H1 (cell line): ENCODE measurements at regions of chrX and their contacts with region 1.

Region 1: DNA sequence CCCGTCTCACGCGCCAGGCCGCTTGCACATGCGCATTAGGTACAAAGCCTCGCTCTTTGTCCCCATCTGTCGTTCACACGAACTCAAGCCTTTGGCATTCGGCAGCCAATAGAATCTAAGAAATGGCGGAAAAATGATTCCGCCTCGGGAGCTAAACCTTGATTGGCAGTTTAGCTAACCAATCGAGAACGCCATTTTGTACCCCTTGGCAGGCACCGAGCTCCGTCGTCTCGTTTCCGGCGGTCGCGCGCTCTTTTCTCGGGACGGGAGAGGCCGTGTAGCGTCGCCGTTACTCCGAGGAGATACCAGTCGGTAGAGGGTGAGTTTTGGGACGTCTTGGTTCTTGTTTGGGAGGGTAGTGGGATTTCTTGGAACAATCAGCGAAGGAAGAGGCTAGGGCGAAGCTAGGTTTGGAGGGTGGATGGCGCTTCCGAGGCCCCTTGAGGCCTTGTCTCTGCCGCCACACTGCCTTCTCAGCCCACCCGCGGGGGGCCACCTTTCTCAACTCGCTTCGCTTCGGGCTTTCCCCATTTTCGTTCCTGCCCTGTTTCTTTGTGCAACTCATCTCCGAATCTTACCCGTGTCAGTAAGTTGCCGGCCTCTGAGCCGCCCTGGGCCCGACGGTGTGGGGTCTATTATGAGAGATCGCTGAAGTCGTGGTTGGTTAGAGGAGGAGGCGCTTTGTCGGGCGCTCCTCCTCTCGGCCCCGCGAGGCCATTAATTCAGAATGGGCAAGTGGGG is at the start of gene NONO:
- DNase-seq: peak; percentile 70 to 88
- H3K4me3 ChIP-seq: peak within 1 kb of the TSS; percentile 86 to 99 (median 88)
- H3K27ac ChIP-seq: peak within 1 kb of the TSS; percentile 95
- H3K4me1 ChIP-seq: peaks cover 0 to 5% (median 3%) of the 10 kb centered on the region in 4 experiments; a peak in 3 of 7 replicates
- H3K27me3 ChIP-seq: no peaks in the 10 kb centered on the region
- CTCF ChIP-seq: peak in 1 of 3 experiments; percentile 3; a peak in 1 of 4 replicates
- EP300 ChIP-seq: no peak
- POLR2A ChIP-seq: peak; percentile 75 to 96
- RAD21 ChIP-seq: no peak
- total RNA-seq, gene NONO: 728 and 778 TPM in 2 replicates

Region 2: GRCh38 chrX:71216485-71216884 is 67.1 kb before region 1 on chrX:
- CTCF ChIA-PET with region 1: no interaction called
- POLR2A ChIA-PET with region 1: no interaction called
- DNase-seq: no peak
- H3K4me3 ChIP-seq: no peak overlapping the region
- H3K27ac ChIP-seq: no peak overlapping the region
- H3K4me1 ChIP-seq: peaks cover 0 to 3% (median 0%) of the 10 kb centered on the region in 4 experiments; a peak in 3 of 7 replicates
- H3K27me3 ChIP-seq: no peaks in the 10 kb centered on the region
- CTCF ChIP-seq: no peak
- EP300 ChIP-seq: no peak
- POLR2A ChIP-seq: no peak
- RAD21 ChIP-seq: no peak

Region 3: DNA sequence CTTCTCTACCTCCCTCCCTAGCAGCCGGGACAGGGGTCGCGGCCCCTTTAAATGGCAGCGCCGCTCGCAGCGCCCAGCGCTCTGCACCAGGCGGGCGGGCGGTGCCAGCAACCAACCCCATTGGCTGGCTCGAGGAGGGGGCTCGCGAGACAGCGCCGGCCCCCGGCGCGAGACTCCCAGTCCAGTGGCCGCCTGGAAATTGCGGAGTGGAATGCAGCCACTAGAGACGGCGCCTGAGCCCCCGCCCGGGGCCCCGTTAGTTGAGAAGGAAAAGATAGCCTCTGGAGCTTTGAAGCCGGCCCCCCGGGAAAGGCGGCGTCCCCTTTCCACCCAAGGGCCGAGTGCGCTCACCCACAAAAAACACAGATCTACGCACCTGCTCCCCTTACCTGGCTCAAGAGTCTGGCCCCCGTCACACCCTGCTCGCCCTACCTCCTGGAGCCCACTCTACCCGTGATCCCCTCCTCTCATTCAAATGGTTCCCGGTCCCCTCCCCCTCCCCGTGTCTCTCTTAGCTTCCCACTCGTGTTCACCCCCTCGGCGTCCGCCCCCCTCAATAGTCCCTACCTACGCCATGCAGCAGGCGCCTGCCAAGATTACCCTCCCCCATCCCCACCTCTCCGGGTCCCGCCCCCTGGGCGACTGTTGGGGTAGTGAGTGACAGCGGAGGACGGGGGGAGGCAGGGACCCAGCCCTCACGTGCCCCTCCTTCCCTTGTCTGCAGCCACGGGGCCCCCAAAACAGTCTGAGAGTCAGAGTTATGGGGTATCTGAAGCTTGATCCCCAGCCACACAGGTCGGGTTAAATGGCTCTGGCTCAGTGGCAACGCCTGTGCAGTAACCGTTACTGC is 29.3 kb before region 1 on chrX and contains the start of gene ZMYM3:
- CTCF ChIA-PET with region 1: interaction called, 4 read pairs
- POLR2A ChIA-PET with region 1: interaction called, 28 read pairs
- DNase-seq: peak in 1 of 2 experiments; percentile 61
- H3K4me3 ChIP-seq: peak within 1 kb of the TSS; percentile 79 to 99 (median 82)
- H3K27ac ChIP-seq: peak within 1 kb of the TSS; percentile 75; the same call in 1 of the 2 replicates
- H3K4me1 ChIP-seq: peaks cover 0 to 5% (median 3%) of the 10 kb centered on the region in 4 experiments; a peak in 4 of 7 replicates
- H3K27me3 ChIP-seq: no peaks in the 10 kb centered on the region
- CTCF ChIP-seq: no peak
- EP300 ChIP-seq: no peak
- POLR2A ChIP-seq: no peak
- RAD21 ChIP-seq: no peak
- total RNA-seq, gene ZMYM3: 82.0 and 86.4 TPM in 2 replicates

Region 4: GRCh38 chrX:71365876-71366673 is 82.5 kb after region 1 on chrX and contains the start of gene TAF1:
- CTCF ChIA-PET with region 1: no interaction called
- POLR2A ChIA-PET with region 1: interaction called, 19 read pairs
- DNase-seq: peak; percentile 73 to 75
- H3K4me3 ChIP-seq: peak within 1 kb of the TSS; percentile 62 to 95 (median 90)
- H3K27ac ChIP-seq: peak within 1 kb of the TSS; percentile 85
- H3K4me1 ChIP-seq: no peaks in the 10 kb centered on the region
- H3K27me3 ChIP-seq: no peaks in the 10 kb centered on the region
- CTCF ChIP-seq: no peak
- EP300 ChIP-seq: no peak
- POLR2A ChIP-seq: peak; percentile 21 to 84; a peak in 2 of 3 replicates
- RAD21 ChIP-seq: no peak
- total RNA-seq, gene TAF1: 30.2 and 30.3 TPM in 2 replicates